Natural killer cell (primary cell): ENCODE measurements at regions of chr5 and their contacts with region 1.

Region 1: GRCh38 chr5:96657087-96657665 is 5.0 kb upstream of the CAST start:
- DNase-seq: peak; percentile 63 to 69
- ATAC-seq: peak; percentile 37 to 63 (median 63)
- H3K4me3 ChIP-seq: no peak overlapping the region
- H3K4me3 Mint-ChIP-seq: peak overlapping the region; percentile 82
- H3K27ac ChIP-seq: no peak overlapping the region
- H3K27ac Mint-ChIP-seq: peak overlapping the region; percentile 78
- H3K4me1 ChIP-seq: peaks cover 39% of the 10 kb centered on the region
- H3K4me1 Mint-ChIP-seq: peaks cover 74 to 75% of the 10 kb centered on the region in 2 donors
- H3K27me3 ChIP-seq: no peaks in the 10 kb centered on the region
- H3K27me3 Mint-ChIP-seq: no peaks in the 10 kb centered on the region
- CTCF ChIP-seq: no peak

Region 2: DNA sequence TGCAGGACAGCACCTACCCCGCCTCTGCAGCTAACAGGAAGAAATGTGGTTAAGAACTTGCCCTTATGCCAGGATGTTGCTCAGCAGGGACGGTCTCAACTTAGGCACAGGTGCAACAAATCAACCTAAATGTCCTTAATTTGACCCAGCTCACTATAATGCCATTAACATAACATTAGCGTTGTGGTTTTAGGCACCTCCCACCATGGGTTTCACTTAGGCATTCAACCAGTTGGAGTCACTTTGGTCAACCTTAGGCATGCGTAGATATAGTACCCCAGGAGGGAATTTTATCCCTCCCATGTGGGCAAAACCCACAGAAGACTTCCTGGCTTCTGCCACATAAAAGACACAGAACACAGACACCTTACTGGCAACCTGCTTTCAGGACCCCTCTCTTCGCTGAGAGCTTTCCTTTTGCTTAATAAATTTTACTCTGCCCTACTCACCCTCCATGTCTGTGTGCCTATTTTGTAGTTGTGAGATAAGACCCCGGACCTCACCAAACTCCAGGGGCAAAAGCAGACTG is 159.3 kb after region 1 on chr5:
- intact Hi-C with region 1: loop called (anchors 5 kb)
- DNase-seq: peak; percentile 44 to 90
- ATAC-seq: peak; percentile 85 to 89 (median 88)
- H3K4me3 ChIP-seq: peak overlapping the region; percentile 37
- H3K4me3 Mint-ChIP-seq: peak overlapping the region; percentile 89
- H3K27ac ChIP-seq: peak overlapping the region; percentile 89
- H3K27ac Mint-ChIP-seq: peak overlapping the region; percentile 96
- H3K4me1 ChIP-seq: peaks cover 30% of the 10 kb centered on the region
- H3K4me1 Mint-ChIP-seq: peaks cover 41 to 43% of the 10 kb centered on the region in 2 donors
- H3K27me3 ChIP-seq: no peaks in the 10 kb centered on the region
- H3K27me3 Mint-ChIP-seq: no peaks in the 10 kb centered on the region
- CTCF ChIP-seq: no peak

Region 3: DNA sequence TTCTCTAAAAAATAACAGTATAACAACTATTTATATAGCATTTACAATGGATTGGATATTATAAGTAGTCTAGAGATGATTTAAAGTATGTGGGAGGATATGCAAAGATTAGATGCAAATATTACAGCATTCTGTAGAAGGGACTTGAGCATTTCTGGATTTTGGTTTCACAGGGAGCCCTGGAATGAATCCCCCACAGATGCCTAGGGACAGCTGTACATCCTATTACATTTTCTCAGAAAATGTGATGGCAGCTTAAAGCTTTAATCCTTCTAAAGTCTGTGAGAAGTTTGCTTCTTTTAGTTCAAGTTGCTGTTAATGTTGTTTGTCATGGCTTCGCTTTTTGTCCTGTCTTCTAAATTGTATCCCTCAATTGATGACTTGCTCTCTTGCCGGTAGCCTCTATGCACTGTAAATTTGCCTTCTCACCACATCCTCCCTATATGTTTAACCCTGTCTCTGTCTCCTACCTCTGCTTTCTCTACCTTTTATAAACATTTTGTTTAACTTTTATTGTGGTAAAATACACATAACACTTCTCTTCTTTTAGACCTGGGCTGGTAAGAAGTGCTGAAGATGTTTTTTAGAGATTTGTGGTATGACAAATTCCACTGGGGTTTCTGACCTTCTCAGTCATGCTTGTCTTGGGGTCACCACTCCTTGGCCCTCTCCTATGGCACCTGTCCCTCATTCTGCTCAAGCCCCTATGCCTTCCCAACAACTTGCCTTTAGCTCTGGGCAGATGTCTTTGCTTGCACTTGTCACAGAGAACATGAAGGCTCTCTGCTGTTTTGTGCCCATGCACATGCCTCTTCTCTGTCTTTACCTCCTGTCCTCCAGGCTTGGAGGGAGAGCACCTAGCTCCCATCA is 316.6 kb after region 1 on chr5:
- intact Hi-C with region 1: no loop called
- DNase-seq: peak in 1 of 2 donors; percentile 45
- ATAC-seq: peak; percentile 68 to 77 (median 71)
- H3K4me3 ChIP-seq: no peak overlapping the region
- H3K4me3 Mint-ChIP-seq: peak overlapping the region; percentile 82
- H3K27ac ChIP-seq: peak overlapping the region; percentile 24
- H3K27ac Mint-ChIP-seq: peak overlapping the region; percentile 82 to 94
- H3K4me1 ChIP-seq: peaks cover 16% of the 10 kb centered on the region
- H3K4me1 Mint-ChIP-seq: peaks cover 64 to 85% of the 10 kb centered on the region in 2 donors
- H3K27me3 ChIP-seq: no peaks in the 10 kb centered on the region
- H3K27me3 Mint-ChIP-seq: no peaks in the 10 kb centered on the region
- CTCF ChIP-seq: no peak